Left lung (tissue), 14 donors: ENCODE measurements at regions of chr2 and their contacts with region 1.

Region 1: DNA sequence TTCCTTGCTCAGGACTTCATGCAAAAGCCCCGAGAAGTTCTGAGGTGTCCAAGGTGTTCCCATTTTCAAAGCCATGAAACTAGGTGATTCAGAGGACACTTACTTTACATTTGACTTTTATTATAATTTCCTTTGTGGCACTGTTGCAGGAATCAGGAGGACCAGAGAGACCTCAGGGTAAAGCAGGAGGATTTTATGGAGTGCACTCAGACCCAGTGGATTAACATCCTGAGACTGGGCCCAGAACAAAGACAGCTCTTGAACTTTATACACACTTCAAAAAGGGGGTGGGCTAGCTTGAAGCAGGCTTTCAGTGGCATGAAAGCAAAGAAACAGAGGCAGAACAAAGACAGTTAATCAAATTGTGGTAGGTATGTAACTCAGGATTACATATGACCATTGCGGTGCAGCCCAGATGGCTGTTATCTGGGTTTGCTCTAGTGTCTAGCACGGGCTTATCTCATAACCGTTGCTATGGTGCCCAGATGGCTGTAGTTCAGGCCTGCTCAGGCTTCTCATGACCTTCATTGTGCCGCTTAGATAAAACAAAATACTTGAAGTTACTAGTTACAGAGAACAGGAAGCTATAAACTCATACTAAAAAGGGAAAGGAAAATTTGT is 39.4 kb downstream of the TMEM182 start:
- DNase-seq: no peak
- ATAC-seq: no peak
- H3K4me3 ChIP-seq: no peak overlapping the region
- H3K27ac ChIP-seq: no peak overlapping the region
- H3K4me1 ChIP-seq: no peaks in the 10 kb centered on the region
- H3K27me3 ChIP-seq: no peaks in the 10 kb centered on the region
- CTCF ChIP-seq: no peak

Region 2: GRCh38 chr2:102743259-102743658 is 57.9 kb before region 1 on chr2:
- intact Hi-C with region 1: no loop called
- DNase-seq: no peak
- ATAC-seq: no peak
- H3K4me3 ChIP-seq: no peak overlapping the region
- H3K27ac ChIP-seq: no peak overlapping the region
- H3K4me1 ChIP-seq: no peaks in the 10 kb centered on the region
- H3K27me3 ChIP-seq: no peaks in the 10 kb centered on the region
- CTCF ChIP-seq: no peak

Region 3: DNA sequence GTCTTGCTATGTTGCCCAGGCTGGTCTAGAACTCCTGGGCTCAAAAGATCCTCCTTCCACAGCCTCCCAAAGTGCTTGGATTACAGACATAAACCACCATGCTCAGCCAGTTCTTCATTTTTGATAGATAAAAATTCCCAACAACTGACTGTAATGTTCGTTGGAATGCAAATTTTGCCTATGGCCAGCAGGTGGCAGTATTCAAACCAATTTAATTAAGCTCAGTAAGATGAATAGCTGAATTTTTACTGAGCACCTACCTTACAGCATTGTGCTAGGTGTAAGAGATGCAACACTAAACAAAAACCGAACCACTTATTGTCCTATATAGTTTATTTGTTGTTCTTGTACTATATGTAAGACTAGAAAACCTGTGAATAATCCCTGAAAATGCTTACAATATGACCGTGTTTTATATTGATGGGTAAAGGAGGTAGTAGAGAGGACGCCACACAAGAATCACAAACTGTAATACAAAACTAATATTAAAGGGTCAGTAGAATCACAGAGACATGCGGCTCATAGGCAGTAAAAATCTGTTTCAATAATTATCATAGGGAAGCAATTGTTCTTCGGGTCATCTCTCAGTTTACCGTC is 47.5 kb before region 1 on chr2:
- intact Hi-C with region 1: loop called in 1 of 2 experiments (anchors 5 kb)
- DNase-seq: peak in 1 of 4 donors; percentile 37
- ATAC-seq: peak; percentile 60
- H3K4me3 ChIP-seq: no peak overlapping the region
- H3K27ac ChIP-seq: no peak overlapping the region
- H3K4me1 ChIP-seq: no peaks in the 10 kb centered on the region
- H3K27me3 ChIP-seq: no peaks in the 10 kb centered on the region
- CTCF ChIP-seq: peak; percentile 81 to 91